Mammary epithelial cell (primary cell): ENCODE measurements at regions of chr16 and their contacts with region 1.

Region 1: DNA sequence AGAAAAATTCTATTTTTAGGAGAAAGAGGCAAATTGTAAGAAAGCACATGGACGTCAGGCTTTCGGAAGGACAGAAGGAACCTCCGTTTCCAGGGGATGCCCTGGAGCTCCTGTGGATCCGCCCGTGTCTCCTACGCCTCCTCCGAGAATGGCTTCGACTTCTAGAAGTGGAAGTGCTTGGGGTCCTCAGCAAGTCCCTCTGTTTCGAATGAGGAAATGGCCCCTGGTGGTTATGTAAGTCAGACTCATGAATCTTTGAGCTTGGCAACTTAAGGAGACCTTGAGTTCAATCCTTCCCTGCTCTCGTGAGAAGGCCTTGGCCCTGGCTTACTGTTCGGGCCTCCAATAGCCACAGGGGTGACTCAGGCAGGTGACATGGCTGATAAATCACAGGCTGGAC is 38.9 kb downstream of the COX4I1 start:
- DNase-seq: no peak
- H3K4me3 ChIP-seq: no peak overlapping the region
- H3K27ac ChIP-seq: no peak overlapping the region
- H3K4me1 ChIP-seq: no peaks in the 10 kb centered on the region
- H3K27me3 ChIP-seq: peaks cover 10% of the 10 kb centered on the region
- CTCF ChIP-seq: no peak

Region 2: GRCh38 chr16:85853547-85854545 is 15.5 kb after region 1 on chr16:
- CTCF ChIA-PET with region 1: no interaction called
- dilution Hi-C with region 1: no loop called
- in situ Hi-C with region 1: no loop called
- intact Hi-C with region 1: no loop called
- DNase-seq: no peak
- H3K4me3 ChIP-seq: no peak overlapping the region
- H3K27ac ChIP-seq: no peak overlapping the region
- H3K4me1 ChIP-seq: no peaks in the 10 kb centered on the region
- H3K27me3 ChIP-seq: no peaks in the 10 kb centered on the region
- CTCF ChIP-seq: no peak

Region 3: GRCh38 chr16:85894266-85894665 is 55.9 kb after region 1 on chr16:
- CTCF ChIA-PET with region 1: no interaction called
- dilution Hi-C with region 1: loop called (anchors 5 kb)
- in situ Hi-C with region 1: no loop called
- intact Hi-C with region 1: no loop called
- DNase-seq: no peak
- H3K4me3 ChIP-seq: no peak overlapping the region
- H3K27ac ChIP-seq: no peak overlapping the region
- H3K4me1 ChIP-seq: no peaks in the 10 kb centered on the region
- H3K27me3 ChIP-seq: peaks cover 19% of the 10 kb centered on the region
- CTCF ChIP-seq: peak in 1 of 2 donors; percentile 17

Region 4: DNA sequence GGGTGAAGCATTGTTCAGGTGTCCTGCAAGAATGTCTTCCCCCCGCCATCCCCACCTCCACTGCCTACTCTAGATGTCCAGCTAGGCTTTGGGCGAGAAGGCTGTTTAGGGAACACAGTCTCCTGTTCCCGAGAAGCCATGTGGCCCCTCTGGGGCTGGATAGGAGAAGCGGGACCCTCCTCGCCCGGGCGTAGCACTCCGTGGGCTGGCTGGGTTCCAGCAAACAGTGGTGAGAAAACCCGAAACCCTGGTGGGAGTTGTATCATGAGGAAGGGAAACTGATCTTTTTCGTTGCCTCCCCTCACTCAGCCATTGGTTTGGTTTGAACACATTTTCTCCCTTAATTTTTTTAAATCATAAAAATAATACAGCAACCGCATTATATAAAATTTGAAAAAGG is 117.2 kb after region 1 on chr16:
- CTCF ChIA-PET with region 1: no interaction called
- dilution Hi-C with region 1: loop called (anchors 5 kb)
- in situ Hi-C with region 1: no loop called
- intact Hi-C with region 1: no loop called
- DNase-seq: no peak
- H3K4me3 ChIP-seq: no peak overlapping the region
- H3K27ac ChIP-seq: no peak overlapping the region
- H3K4me1 ChIP-seq: no peaks in the 10 kb centered on the region
- H3K27me3 ChIP-seq: no peaks in the 10 kb centered on the region
- CTCF ChIP-seq: no peak

Region 5: GRCh38 chr16:86044881-86045590 is 206.7 kb after region 1 on chr16:
- CTCF ChIA-PET with region 1: no interaction called
- dilution Hi-C with region 1: loop called (anchors 5 kb)
- in situ Hi-C with region 1: no loop called
- intact Hi-C with region 1: no loop called
- DNase-seq: no peak
- H3K4me3 ChIP-seq: no peak overlapping the region
- H3K27ac ChIP-seq: no peak overlapping the region
- H3K4me1 ChIP-seq: no peaks in the 10 kb centered on the region
- H3K27me3 ChIP-seq: no peaks in the 10 kb centered on the region
- CTCF ChIP-seq: no peak